CD8-positive, alpha-beta T cell (primary cell): ENCODE measurements at regions of chr1 and their contacts with region 1.

Region 1: DNA sequence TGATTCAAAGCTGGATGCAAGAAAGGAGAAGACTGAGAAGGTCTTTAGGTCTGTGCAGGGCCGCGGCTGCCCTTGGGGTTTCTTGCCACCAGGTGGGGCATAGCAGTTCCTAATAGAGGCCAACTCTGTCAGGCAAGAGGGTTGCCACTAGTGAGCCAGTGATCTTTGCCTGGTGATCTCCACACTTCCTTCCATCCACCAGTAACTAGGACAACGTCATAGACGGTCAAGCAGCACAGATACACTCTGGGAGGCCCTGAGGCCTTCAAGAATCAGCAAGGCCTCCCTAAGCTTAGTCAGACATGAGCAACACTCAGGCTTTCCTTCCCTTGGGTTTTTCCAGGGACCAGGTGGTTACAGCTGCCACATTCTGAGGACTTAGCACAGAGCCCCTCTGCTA is 32.9 kb upstream of the ATP2B4 start:
- DNase-seq: peak; percentile 32 to 82 (median 63)
- ATAC-seq: peak; percentile 85
- H3K4me3 ChIP-seq: no peak overlapping the region
- H3K4me3 Mint-ChIP-seq: no peak overlapping the region
- H3K27ac ChIP-seq: no peak overlapping the region
- H3K27ac Mint-ChIP-seq: no peak overlapping the region
- H3K4me1 ChIP-seq: no peaks in the 10 kb centered on the region
- H3K4me1 Mint-ChIP-seq: peaks cover 8% of the 10 kb centered on the region
- H3K27me3 ChIP-seq: no peaks in the 10 kb centered on the region
- H3K27me3 Mint-ChIP-seq: no peaks in the 10 kb centered on the region
- CTCF ChIP-seq: peak; percentile 35

Region 2: DNA sequence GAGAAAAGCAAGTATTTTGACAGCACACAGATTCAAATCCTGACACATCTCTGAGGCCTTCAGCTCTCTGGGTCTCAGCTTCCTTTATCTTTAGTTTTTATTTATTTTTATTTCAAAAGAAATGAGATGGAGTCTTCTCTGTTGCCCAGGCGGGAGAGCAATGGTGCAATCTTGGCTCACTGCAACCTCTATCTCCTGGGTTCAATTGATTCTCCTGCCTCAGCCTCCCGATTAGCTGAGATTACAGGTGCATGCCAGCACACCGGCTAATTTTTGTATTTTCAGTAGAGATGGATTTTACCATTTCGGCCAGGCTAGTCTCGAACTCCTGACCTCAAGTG is 13.8 kb after region 1 on chr1:
- CTCF ChIA-PET with region 1: interaction called, 13 read pairs
- POLR2A ChIA-PET with region 1: interaction called, 4 read pairs
- intact Hi-C with region 1: loop called in 1 of 2 experiments (anchors 2 kb)
- DNase-seq: no peak
- ATAC-seq: no peak
- H3K4me3 ChIP-seq: no peak overlapping the region
- H3K4me3 Mint-ChIP-seq: no peak overlapping the region
- H3K27ac ChIP-seq: peak overlapping the region in 1 of 2 experiments; percentile 61
- H3K27ac Mint-ChIP-seq: peak overlapping the region; percentile 93
- H3K4me1 ChIP-seq: peaks cover 20% of the 10 kb centered on the region
- H3K4me1 Mint-ChIP-seq: peaks cover 48% of the 10 kb centered on the region
- H3K27me3 ChIP-seq: no peaks in the 10 kb centered on the region
- H3K27me3 Mint-ChIP-seq: no peaks in the 10 kb centered on the region
- CTCF ChIP-seq: no peak

Region 3: GRCh38 chr1:203673550-203674427 is 80.1 kb after region 1 on chr1:
- CTCF ChIA-PET with region 1: interaction called, 6 read pairs
- POLR2A ChIA-PET with region 1: no interaction called
- intact Hi-C with region 1: loop called in 1 of 2 experiments (anchors 1 kb)
- DNase-seq: peak; percentile 43 to 94 (median 70)
- ATAC-seq: peak; percentile 88
- H3K4me3 ChIP-seq: no peak overlapping the region
- H3K4me3 Mint-ChIP-seq: peak overlapping the region; percentile 56
- H3K27ac ChIP-seq: peak overlapping the region; percentile 11 to 78
- H3K27ac Mint-ChIP-seq: peak overlapping the region; percentile 98
- H3K4me1 ChIP-seq: peaks cover 48% of the 10 kb centered on the region
- H3K4me1 Mint-ChIP-seq: peaks cover 66% of the 10 kb centered on the region
- H3K27me3 ChIP-seq: no peaks in the 10 kb centered on the region
- H3K27me3 Mint-ChIP-seq: no peaks in the 10 kb centered on the region
- CTCF ChIP-seq: peak; percentile 41

Region 4: DNA sequence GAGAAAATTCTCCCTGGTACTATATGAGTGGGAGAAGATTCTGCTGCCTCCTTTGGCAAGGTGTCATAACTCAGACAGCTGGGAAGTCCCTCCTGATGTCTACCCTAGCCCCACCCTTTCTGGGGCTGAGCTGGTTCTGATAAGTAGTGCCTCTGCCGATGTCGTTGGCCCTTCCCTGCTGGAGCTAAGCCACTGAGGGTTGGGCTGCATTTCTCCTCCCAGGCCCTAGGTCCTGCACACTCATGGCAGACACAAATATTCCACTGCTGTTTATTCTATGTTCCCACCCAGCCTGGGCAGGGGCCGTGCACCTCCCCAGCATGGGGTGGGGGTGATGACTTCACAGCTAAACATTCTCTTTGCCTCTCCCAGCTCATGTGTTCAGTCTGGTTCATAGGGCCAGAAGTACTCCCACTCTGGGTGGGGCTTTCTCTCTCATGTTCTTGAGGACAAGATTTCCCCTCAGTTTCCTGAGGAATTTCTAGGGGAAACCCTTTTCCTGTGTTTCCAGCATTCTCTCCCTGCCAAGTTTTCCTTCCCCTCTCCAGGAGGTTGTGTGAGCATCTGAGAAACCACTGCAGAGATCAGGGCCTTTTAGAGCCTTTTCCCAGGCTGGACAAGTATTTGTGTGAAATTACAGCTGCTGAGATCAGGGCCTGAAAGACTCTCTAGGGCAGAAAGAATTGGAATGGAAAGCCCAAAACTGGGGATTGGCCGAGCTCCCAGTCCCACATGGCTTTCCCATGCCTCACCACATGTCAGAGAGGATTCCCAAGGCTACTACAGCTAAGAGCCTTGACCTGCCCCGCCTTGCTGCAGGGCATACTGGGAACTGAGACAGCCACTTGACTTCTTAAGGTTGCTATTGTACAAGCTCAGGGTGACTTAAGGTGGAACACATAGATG is 99.1 kb after region 1 on chr1:
- CTCF ChIA-PET with region 1: interaction called, 123 read pairs
- POLR2A ChIA-PET with region 1: no interaction called
- intact Hi-C with region 1: no loop called
- DNase-seq: peak in 1 of 9 experiments; percentile 23
- ATAC-seq: no peak
- H3K4me3 ChIP-seq: no peak overlapping the region
- H3K4me3 Mint-ChIP-seq: no peak overlapping the region
- H3K27ac ChIP-seq: peak overlapping the region in 1 of 2 experiments; percentile 34
- H3K27ac Mint-ChIP-seq: peak overlapping the region; percentile 69
- H3K4me1 ChIP-seq: peaks cover 10% of the 10 kb centered on the region
- H3K4me1 Mint-ChIP-seq: peaks cover 42% of the 10 kb centered on the region
- H3K27me3 ChIP-seq: no peaks in the 10 kb centered on the region
- H3K27me3 Mint-ChIP-seq: no peaks in the 10 kb centered on the region
- CTCF ChIP-seq: no peak

Region 5: DNA sequence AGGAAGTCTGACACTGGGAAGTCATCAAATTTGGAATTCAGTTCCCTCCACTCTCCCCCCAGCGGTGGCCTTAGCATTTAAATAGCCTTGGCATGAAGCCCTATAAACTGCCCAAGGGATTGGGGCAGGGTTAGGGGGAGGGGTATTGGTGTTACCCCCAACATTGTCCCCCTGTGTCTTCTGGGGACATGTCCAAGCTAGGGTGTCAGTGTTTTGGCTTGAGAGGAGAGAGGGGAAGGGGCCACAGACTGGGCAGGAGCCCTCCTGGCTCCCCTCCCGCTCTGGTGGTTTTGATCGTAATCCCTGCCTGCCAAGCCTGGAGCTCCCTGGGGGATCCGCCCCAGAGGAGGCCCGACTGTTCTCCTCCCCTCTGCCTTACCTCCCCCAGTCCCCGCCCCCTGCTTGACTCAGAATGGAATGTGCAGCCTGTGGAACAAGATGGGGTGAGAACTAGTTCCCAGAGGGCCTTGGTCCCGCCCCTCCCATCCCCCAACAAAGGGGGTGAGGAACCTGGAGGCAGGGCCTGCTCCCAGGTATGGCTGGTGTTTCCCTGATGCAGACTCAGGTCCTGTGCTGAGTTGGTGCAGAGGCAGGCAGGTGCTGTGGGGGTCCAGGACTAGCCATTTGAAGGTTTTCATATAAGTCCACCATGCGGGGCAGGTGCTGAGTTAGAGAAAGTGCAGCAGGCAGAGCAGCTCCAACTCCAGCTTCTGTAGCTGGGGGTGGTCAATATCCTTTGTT is 486.6 kb after region 1 on chr1:
- CTCF ChIA-PET with region 1: no interaction called
- POLR2A ChIA-PET with region 1: no interaction called
- intact Hi-C with region 1: no loop called
- DNase-seq: no peak
- ATAC-seq: no peak
- H3K4me3 ChIP-seq: no peak overlapping the region
- H3K4me3 Mint-ChIP-seq: no peak overlapping the region
- H3K27ac ChIP-seq: no peak overlapping the region
- H3K27ac Mint-ChIP-seq: no peak overlapping the region
- H3K4me1 ChIP-seq: peaks cover 2% of the 10 kb centered on the region
- H3K4me1 Mint-ChIP-seq: peaks cover 9% of the 10 kb centered on the region
- H3K27me3 ChIP-seq: no peaks in the 10 kb centered on the region
- H3K27me3 Mint-ChIP-seq: peaks cover 36% of the 10 kb centered on the region
- CTCF ChIP-seq: no peak